HepG2 (cell line): ENCODE measurements at regions of chr1 and their contacts with region 1.

Region 1: GRCh38 chr1:91997607-91998195 is 32.1 kb upstream of the EPHX4 start:
- DNase-seq: peak; percentile 35
- ATAC-seq: no peak
- H3K4me3 ChIP-seq: no peak overlapping the region
- H3K27ac ChIP-seq: no peak overlapping the region
- H3K4me1 ChIP-seq: no peaks in the 10 kb centered on the region
- H3K27me3 ChIP-seq: no peaks in the 10 kb centered on the region
- CTCF ChIP-seq: peak; percentile 62
- EP300 ChIP-seq: no peak
- POLR2A ChIP-seq: no peak
- RAD21 ChIP-seq: peak; percentile 26; the same call in 1 of the 2 replicates

Region 2: GRCh38 chr1:92065044-92065443 is 67.3 kb after region 1 on chr1:
- CTCF ChIA-PET with region 1: no interaction called
- POLR2A ChIA-PET with region 1: no interaction called
- in situ Hi-C with region 1: no loop called
- intact Hi-C with region 1: loop called (anchors 5 kb)
- DNase-seq: peak; percentile 11
- ATAC-seq: peak; percentile 77
- H3K4me3 ChIP-seq: no peak overlapping the region
- H3K27ac ChIP-seq: no peak overlapping the region
- H3K4me1 ChIP-seq: no peaks in the 10 kb centered on the region
- H3K27me3 ChIP-seq: no peaks in the 10 kb centered on the region
- CTCF ChIP-seq: peak; percentile 36; the same call in 1 of the 2 replicates
- EP300 ChIP-seq: no peak
- POLR2A ChIP-seq: no peak
- RAD21 ChIP-seq: no peak

Region 3: GRCh38 chr1:92291372-92291999 is 293.8 kb after region 1 on chr1:
- CTCF ChIA-PET with region 1: interaction called, 10 read pairs
- POLR2A ChIA-PET with region 1: no interaction called
- in situ Hi-C with region 1: loop called (anchors 5 kb)
- intact Hi-C with region 1: loop called (anchors 1 kb)
- DNase-seq: peak; percentile 52
- ATAC-seq: peak; percentile 70
- H3K4me3 ChIP-seq: no peak overlapping the region
- H3K27ac ChIP-seq: no peak overlapping the region
- H3K4me1 ChIP-seq: no peaks in the 10 kb centered on the region
- H3K27me3 ChIP-seq: no peaks in the 10 kb centered on the region
- CTCF ChIP-seq: peak; percentile 72
- EP300 ChIP-seq: no peak
- POLR2A ChIP-seq: no peak
- RAD21 ChIP-seq: peak; percentile 41; the same call in 1 of the 2 replicates